Aorta (tissue), 5 donors: ENCODE measurements at regions of chr22 and their contacts with region 1.

Region 1: GRCh38 chr22:38353142-38353629 is 36.0 kb upstream of the CSNK1E start:
- DNase-seq: peak; percentile 72 to 91
- ATAC-seq: peak; percentile 91
- H3K4me3 ChIP-seq: no peak overlapping the region
- H3K27ac ChIP-seq: no peak overlapping the region
- H3K4me1 ChIP-seq: no peaks in the 10 kb centered on the region
- H3K27me3 ChIP-seq: no peaks in the 10 kb centered on the region

Region 2: GRCh38 chr22:38051900-38052862 is 301.0 kb before region 1 on chr22:
- intact Hi-C with region 1: loop called (anchors 5 kb)
- DNase-seq: peak; percentile 83 to 93
- ATAC-seq: peak; percentile 86
- H3K4me3 ChIP-seq: no peak overlapping the region
- H3K27ac ChIP-seq: no peak overlapping the region
- H3K4me1 ChIP-seq: no peaks in the 10 kb centered on the region
- H3K27me3 ChIP-seq: no peaks in the 10 kb centered on the region

Region 3: DNA sequence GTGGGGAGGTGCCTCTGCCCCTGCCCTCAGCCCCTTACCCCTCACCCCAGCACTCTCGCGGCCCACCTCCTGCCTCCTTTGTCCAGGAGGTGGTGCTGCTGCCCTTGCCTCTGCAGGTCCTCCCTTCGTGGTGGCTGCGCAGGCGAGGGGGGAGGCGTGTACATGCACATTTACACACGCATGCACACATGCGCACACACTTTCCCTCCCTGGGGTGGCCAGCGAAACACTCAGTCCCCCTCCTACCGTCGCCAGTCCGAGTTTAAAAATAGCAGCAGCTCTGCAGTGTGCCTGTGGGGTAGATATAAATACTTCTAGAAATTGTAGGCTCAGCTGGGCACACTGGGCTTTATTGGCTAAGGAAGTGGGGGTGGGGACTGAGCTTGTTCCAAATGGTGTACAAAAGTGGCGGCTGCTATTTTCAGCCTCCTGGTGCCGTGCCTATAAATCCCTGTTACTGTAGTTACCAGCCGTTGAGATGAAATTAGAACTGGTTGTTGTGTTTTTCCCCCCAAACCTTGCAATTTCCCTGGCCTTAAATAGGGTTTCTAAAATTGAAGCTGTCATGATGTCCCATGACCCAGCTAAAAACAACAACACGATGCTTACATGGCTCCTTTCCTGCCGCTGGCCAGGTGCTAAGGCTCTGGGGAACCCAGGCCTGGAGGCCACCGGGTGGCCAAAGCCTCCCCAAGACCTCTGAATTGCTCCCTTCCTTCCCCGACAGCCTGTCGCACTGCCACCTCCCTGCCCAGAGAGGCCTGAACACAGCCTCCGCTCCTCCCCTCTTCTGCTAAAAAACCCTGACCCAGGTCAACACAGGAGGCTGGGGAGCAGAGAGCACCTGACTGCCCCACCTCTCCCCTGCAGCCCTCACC is 283.6 kb before region 1 on chr22:
- intact Hi-C with region 1: loop called (anchors 1 to 5 kb)
- DNase-seq: peak; percentile 94 to 95
- ATAC-seq: peak; percentile 88
- H3K4me3 ChIP-seq: no peak overlapping the region
- H3K27ac ChIP-seq: peak overlapping the region; percentile 89 to 94
- H3K4me1 ChIP-seq: no peaks in the 10 kb centered on the region
- H3K27me3 ChIP-seq: no peaks in the 10 kb centered on the region

Region 4: DNA sequence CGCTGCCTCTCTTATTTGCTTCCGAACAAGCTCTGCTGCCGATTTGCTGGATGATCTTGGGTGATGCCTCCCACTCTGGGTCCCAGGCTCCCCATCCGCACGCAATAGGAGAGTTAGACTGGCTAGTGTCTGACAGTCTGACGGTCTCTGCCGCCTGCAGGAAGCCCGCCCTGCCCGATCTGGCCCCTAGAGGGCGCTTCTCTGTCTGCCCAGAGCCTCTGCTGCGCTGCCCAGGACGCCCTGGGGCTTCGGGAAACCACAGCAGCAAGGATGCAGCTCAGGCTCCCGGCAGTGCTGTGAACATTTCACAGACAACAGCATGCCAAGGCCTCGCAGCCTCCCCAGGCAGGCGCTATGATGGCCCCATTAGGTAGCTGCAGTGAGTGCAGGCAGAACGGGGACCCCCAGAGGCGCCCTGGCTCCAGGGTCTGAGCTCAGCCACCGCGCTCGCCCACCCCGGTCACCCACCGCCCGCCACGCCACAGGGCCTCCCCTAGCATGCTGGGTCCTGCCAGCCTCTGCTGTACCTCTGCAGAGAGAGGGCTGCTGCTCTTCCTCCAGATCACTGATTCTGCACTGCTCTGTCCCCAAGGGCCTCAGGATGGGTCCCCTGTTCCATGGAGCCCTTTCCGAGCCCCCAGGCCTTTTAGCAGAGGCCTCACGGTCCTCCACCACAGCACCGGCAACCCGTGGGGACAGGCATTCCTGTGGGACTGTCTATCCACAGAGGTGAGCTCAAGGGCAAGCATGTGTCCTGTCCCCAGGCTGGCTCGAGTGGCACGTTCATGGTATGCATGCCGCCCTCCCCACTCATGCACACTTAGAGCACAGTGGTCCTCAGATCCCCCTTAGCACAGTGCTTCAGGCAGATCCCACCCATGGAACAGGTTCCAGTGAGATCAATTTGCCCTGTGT is 238.4 kb before region 1 on chr22:
- intact Hi-C with region 1: loop called (anchors 1 to 5 kb)
- DNase-seq: peak; percentile 91 to 96
- ATAC-seq: peak; percentile 85
- H3K4me3 ChIP-seq: no peak overlapping the region
- H3K27ac ChIP-seq: no peak overlapping the region
- H3K4me1 ChIP-seq: no peaks in the 10 kb centered on the region
- H3K27me3 ChIP-seq: no peaks in the 10 kb centered on the region

Region 5: GRCh38 chr22:38262051-38262795 is 91.0 kb before region 1 on chr22:
- intact Hi-C with region 1: loop called in 1 of 2 experiments (anchors 2 kb)
- DNase-seq: peak; percentile 61 to 85
- ATAC-seq: peak; percentile 38
- H3K4me3 ChIP-seq: no peak overlapping the region
- H3K27ac ChIP-seq: no peak overlapping the region
- H3K4me1 ChIP-seq: peaks cover 0 to 8% of the 10 kb centered on the region in 2 donors
- H3K27me3 ChIP-seq: no peaks in the 10 kb centered on the region